OCI-LY7 (cell line): ENCODE measurements at regions of chr14 and their contacts with region 1.

Region 1: GRCh38 chr14:89384023-89384422 is 33.0 kb downstream of the FOXN3 start:
- DNase-seq: peak; percentile 98
- H3K4me3 ChIP-seq: peak overlapping the region; percentile 53
- H3K27ac ChIP-seq: peak overlapping the region; percentile 91
- H3K4me1 ChIP-seq: peaks cover 81% of the 10 kb centered on the region
- CTCF ChIP-seq: no peak

Region 2: DNA sequence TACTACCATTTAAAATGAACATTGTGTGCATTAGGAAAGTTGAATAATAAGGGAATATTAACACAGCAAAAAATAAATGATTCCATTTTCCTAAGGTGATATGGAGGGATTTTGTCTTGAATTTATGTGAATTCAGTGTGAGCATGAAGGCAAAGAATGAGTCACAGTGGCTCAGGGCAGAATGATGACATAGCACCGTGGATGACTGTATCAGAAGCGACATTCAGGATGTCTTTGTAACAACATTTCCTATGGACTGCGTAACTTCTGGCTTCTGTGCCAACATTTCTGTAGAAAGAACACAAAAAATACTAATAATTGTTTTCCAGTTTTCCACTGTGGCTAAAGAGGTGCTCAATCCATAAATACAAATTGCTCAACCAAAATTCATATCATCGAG is 505.0 kb before region 1 on chr14:
- CTCF ChIA-PET with region 1: no interaction called
- POLR2A ChIA-PET with region 1: no interaction called
- intact Hi-C with region 1: no loop called
- DNase-seq: no peak
- H3K4me3 ChIP-seq: no peak overlapping the region
- H3K27ac ChIP-seq: no peak overlapping the region
- H3K4me1 ChIP-seq: no peaks in the 10 kb centered on the region
- CTCF ChIP-seq: no peak

Region 3: DNA sequence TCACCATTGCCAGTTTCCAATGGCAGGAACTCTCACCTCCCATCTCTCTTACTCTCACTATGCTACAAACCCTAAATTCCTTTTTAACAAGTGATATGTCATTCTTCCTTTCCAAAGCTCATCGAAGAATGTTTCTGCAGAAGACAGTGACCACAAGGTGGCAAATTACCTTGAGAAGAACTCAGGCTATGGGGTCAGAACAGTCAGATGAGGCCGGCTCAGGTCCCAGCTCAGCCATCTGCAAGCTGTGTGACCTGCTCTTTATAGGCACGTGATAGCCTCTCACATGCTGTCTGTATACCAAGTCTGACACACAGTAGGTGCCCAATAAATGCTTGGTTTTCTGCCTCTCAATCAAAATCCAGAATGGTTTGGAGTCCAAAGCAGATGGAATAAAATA is 47.7 kb before region 1 on chr14:
- CTCF ChIA-PET with region 1: no interaction called
- POLR2A ChIA-PET with region 1: no interaction called
- intact Hi-C with region 1: loop called (anchors 5 kb)
- DNase-seq: peak; percentile 82
- H3K4me3 ChIP-seq: no peak overlapping the region
- H3K27ac ChIP-seq: no peak overlapping the region
- H3K4me1 ChIP-seq: peaks cover 83% of the 10 kb centered on the region
- CTCF ChIP-seq: peak; percentile 77

Region 4: DNA sequence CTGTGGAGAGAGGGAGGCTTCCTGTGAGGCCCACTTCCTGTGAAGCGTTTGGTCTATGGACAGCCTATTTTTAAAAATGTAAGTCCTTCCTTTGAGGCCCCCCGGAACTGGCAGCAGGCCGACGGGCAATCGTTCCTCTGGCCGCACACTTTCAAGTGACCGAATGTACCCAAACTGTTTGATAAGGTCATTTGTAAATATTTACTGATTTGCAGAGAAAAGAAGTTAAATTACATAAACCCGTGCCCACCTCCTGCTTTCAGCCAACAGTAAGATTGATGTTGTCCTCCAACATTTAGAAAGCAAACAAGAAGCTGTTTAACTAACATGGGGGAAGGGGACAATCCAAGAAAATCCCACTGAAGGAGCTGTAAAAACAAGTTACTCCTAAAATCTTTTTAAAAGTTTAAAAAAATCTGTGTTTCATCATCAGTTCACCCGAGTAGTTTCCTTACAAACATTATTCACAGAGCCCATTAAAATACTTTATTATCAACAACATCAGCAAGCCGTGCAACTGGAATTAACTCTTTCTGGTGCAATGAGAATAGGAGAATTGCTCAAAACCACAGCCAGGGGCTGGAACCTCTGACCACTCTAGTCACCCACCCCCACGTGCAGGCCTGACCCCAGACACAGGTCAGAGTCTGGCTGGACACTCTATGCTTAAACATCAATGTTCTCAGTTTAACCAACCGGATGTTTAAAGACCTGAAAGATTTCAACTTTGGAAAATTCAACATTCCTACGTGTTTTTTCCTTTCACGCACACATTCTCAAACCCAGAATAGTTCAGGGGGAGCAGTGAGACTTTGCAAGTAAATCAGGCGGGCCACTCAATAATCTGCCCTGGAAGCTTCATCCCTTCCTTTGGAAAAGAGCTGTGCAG is 32.3 kb before region 1 on chr14:
- CTCF ChIA-PET with region 1: no interaction called
- POLR2A ChIA-PET with region 1: interaction called, 13 read pairs
- intact Hi-C with region 1: no loop called
- DNase-seq: peak; percentile 83
- H3K4me3 ChIP-seq: peak overlapping the region; percentile 57
- H3K27ac ChIP-seq: peak overlapping the region; percentile 80
- H3K4me1 ChIP-seq: peaks cover 73% of the 10 kb centered on the region
- CTCF ChIP-seq: no peak

Region 5: DNA sequence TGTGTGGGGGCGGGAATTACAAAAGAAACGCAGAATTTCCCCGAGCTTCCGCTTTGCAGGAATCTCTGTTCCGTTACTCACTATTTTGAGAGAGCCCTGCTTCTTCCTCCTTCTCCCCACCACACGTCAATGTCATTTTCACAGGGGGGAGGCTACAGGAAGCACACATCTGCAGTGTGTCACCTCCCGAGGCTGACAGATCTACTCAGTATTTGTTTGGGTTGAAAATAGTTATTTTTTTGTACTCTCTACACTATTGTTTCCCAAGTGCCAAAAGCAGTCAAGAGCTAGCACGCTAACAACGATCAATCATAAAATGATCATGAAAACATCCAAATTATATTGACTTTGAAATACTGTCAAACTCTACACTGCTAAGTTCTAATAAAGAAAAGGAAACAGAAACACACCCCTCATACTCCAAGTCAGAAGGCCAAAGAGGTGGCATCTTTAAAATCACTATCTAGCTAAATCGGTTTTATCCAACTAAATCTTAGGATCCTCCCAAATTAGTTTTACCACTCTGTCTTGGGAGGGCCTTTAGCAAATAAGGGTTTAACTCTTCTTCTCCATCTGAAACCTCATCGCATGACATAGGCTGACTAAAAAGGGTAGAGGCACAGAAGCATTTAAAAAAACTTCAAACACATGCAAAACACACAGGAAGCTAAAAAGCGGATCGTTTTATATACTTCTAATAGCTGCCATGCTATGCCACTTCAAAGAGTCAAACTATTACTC is 18.8 kb before region 1 on chr14:
- CTCF ChIA-PET with region 1: interaction called, 4 read pairs
- POLR2A ChIA-PET with region 1: interaction called, 13 read pairs
- intact Hi-C with region 1: loop called (anchors 2 kb)
- DNase-seq: peak; percentile 82
- H3K4me3 ChIP-seq: peak overlapping the region; percentile 63
- H3K27ac ChIP-seq: peak overlapping the region; percentile 91
- H3K4me1 ChIP-seq: peaks cover 57% of the 10 kb centered on the region
- CTCF ChIP-seq: no peak

Region 6: DNA sequence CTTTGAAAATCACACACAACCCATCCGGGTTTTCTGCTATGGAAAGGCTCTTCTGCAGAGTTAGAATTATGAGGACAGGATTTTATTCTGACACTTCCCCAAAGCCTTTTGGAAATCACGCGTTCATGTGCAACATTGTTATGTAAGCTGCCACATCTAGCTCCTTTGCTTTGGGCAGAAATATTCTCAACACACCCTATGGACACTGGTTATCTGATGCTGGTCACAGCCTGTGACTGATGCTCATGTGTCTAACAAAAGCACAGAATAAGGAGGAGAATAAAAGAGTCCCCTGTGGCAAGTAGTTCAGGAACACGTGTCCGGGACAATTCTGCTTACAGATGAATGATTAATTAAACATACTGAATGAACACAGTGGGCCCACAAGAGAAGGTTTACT is 10.9 kb after region 1 on chr14:
- CTCF ChIA-PET with region 1: no interaction called
- POLR2A ChIA-PET with region 1: interaction called, 17 read pairs
- intact Hi-C with region 1: no loop called
- DNase-seq: no peak
- H3K4me3 ChIP-seq: no peak overlapping the region
- H3K27ac ChIP-seq: no peak overlapping the region
- H3K4me1 ChIP-seq: peaks cover 61% of the 10 kb centered on the region
- CTCF ChIP-seq: no peak

Region 7: GRCh38 chr14:89773644-89774316 is 389.8 kb after region 1 on chr14:
- CTCF ChIA-PET with region 1: interaction called, 3 read pairs
- POLR2A ChIA-PET with region 1: no interaction called
- intact Hi-C with region 1: loop called (anchors 1 kb)
- DNase-seq: peak; percentile 85
- H3K4me3 ChIP-seq: peak overlapping the region; percentile 53
- H3K27ac ChIP-seq: peak overlapping the region; percentile 79
- H3K4me1 ChIP-seq: peaks cover 49% of the 10 kb centered on the region
- CTCF ChIP-seq: no peak